ENCODE measurements at regions of chr11 and their contacts with region 1.

Region 1: DNA sequence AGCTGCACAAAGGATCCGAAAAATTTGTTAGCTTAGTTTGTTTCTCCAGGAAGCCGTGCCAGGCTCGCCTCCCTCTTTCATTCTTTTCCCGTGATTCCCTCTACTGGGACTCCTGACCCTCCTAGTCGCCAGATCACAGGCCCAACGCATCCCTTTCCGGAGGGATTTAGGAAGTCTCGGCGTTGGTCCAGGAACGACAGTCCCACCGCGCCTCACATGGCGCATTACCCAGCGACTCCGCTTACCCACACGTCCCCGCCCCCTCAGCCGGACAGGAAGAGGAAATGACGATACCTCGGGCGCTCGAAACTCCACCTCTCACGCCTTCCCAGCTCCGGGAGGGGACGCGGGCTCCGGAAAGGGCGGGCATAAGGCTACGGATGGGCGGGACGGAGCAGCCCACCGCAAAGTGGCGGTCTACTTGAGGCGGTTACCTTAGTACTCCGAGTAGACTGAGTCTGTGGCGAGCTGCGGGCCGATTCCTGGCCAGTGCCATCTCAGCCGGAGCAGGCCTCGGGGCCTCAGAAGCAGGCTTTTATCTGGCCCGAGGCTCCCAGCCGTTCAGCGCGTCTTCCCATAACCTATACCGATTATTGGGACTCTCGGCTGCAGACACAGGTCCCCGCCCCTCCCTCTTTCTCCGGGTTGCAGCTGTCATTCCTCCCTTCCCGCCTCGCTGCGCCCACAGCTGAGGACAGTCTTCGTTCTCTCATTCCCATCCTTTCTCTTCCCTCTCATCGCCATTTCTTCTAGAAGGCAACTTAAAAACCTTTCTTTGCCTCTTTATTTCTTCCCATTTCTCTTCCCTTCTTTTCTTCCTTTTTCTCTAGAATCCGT is at the start of gene CCDC15:
- DNase-seq: peak; percentile 95

Region 2: DNA sequence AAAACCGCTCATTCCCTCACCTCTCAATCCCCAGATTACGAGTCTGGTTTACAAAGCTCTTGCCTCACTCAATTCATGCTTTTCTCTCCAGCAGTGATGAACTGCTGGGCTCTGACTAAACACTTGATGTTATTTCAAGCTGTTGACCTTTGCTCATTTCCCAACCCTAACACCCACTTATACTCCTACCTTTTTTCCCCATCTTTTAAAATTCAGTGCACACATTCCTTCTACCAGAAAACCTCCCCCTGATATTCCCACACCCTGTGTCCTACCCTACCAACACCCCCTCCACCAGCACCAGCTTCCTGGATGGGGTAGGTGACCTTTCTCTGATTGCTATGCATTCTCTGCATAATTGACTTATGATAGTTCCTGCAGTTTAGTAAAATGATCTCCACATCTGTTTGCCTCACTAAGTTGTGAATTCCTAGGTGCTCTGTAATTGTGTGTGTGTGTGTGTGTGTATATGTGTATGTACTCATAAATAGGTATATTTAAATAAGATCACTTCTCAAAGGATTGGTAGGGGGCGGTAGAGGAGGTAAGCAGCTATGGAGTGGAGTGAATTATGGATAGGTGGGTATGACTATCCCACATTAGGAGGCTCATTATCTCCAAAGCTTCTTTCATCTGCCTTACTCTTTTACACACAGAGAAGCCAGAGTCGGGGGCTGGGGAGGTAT is 19.0 kb before region 1 on chr11:
- CTCF ChIA-PET with region 1: no interaction called
- POLR2A ChIA-PET with region 1: interaction called, 14 read pairs
- DNase-seq: no peak

Region 3: GRCh38 chr11:124943254-124943616 is 10.7 kb before region 1 on chr11:
- CTCF ChIA-PET with region 1: no interaction called
- POLR2A ChIA-PET with region 1: interaction called, 15 read pairs
- DNase-seq: no peak

Measured in HEK293T (cell line).